H1 (cell line): ENCODE measurements at regions of chr6 and their contacts with region 1.

Region 1: GRCh38 chr6:107033126-107033525 is 5.1 kb downstream of the MTRES1 start:
- DNase-seq: no peak
- H3K4me3 ChIP-seq: no peak overlapping the region
- H3K27ac ChIP-seq: no peak overlapping the region
- H3K4me1 ChIP-seq: no peaks in the 10 kb centered on the region
- H3K27me3 ChIP-seq: no peaks in the 10 kb centered on the region
- CTCF ChIP-seq: no peak
- EP300 ChIP-seq: no peak
- POLR2A ChIP-seq: no peak
- RAD21 ChIP-seq: no peak

Region 2: DNA sequence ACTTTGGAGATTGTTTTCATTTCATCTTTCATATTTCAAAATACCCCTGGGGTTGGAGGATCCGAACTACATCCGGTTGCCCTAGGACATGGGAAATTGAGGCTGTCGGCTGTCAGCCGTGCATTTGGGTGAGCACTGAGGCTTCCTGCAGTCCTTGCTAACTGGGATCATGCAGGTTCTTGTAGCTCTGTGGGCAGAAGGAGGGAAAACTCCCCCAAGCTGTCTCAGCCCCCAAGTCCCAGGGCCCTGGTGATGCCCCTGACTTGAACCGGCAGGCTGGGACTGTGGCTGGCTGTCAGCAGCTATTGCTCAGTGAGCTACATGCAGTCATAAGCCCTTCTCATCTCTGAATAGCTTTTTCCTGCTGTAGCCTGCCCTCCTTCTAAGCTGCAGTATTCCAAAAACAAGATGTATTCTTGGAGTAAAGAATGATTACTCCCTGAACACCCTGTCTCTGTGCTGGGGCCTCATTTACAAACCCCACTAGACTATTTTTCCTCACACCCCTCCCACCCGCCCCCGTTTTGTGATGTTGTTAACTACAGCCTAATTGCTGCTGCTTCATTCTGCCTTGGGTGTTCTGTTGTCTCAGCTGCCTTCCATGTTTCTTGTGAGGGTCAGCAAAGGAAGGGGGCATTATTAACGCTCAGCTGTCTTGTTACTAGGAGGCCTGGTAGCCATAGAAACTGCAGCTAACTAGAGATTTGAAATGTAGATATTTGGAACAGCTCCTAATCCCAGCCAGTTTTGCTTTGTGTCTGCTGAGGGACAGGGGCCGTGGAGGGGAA is 12.9 kb after region 1 on chr6:
- CTCF ChIA-PET with region 1: interaction called, 17 read pairs
- POLR2A ChIA-PET with region 1: interaction called, 7 read pairs
- DNase-seq: no peak
- H3K4me3 ChIP-seq: no peak overlapping the region
- H3K27ac ChIP-seq: no peak overlapping the region
- H3K4me1 ChIP-seq: no peaks in the 10 kb centered on the region
- H3K27me3 ChIP-seq: no peaks in the 10 kb centered on the region; a peak in 1 of 7 replicates
- CTCF ChIP-seq: no peak
- EP300 ChIP-seq: no peak
- POLR2A ChIP-seq: no peak
- RAD21 ChIP-seq: no peak